PC-9 (cell line): ENCODE measurements at regions of chr17 and their contacts with region 1.

Region 1: GRCh38 chr17:79429864-79430494 is 180.9 kb downstream of the RBFOX3 start:
- DNase-seq: no peak
- H3K4me3 ChIP-seq: no peak overlapping the region
- H3K27ac ChIP-seq: no peak overlapping the region
- H3K4me1 ChIP-seq: no peaks in the 10 kb centered on the region
- H3K27me3 ChIP-seq: peaks cover 94% of the 10 kb centered on the region
- CTCF ChIP-seq: no peak

Region 2: GRCh38 chr17:78697554-78698343 is 732.2 kb before region 1 on chr17:
- CTCF ChIA-PET with region 1: interaction called, 16 read pairs
- POLR2A ChIA-PET with region 1: no interaction called
- intact Hi-C with region 1: no loop called
- DNase-seq: no peak
- H3K4me3 ChIP-seq: no peak overlapping the region
- H3K27ac ChIP-seq: no peak overlapping the region
- H3K4me1 ChIP-seq: no peaks in the 10 kb centered on the region
- H3K27me3 ChIP-seq: no peaks in the 10 kb centered on the region
- CTCF ChIP-seq: no peak